ENCODE measurements at regions of chr2 and their contacts with region 1.

Region 1: GRCh38 chr2:197499594-197500526 is at the starts of genes HSPD1 and HSPE1:
- DNase-seq: peak; percentile 99
- ATAC-seq: peak; percentile 83
- H3K4me3 ChIP-seq: peak within 1 kb of the TSS; percentile 81 to 83
- H3K27ac ChIP-seq: peak within 1 kb of the TSS; percentile 98
- H3K4me1 ChIP-seq: peaks cover 7 to 29% of the 10 kb centered on the region in 2 experiments; a peak in 3 of 4 replicates
- H3K27me3 ChIP-seq: no peaks in the 10 kb centered on the region
- CTCF ChIP-seq: no peak
- POLR2A ChIP-seq: peak; percentile 84
- RAD21 ChIP-seq: no peak; the same call in 1 of the 2 replicates
- total RNA-seq, gene HSPD1: 995 TPM
- total RNA-seq, gene HSPE1: 291 TPM

Region 2: GRCh38 chr2:197198890-197199289 is 301.0 kb before region 1 on chr2:
- CTCF ChIA-PET with region 1: no interaction called
- POLR2A ChIA-PET with region 1: no interaction called
- RAD21 ChIA-PET with region 1: no interaction called
- intact Hi-C with region 1: no loop called
- DNase-seq: no peak
- ATAC-seq: no peak
- H3K4me3 ChIP-seq: no peak overlapping the region
- H3K27ac ChIP-seq: no peak overlapping the region
- H3K4me1 ChIP-seq: peaks cover 0 to 5% of the 10 kb centered on the region in 2 experiments; a peak in 1 of 4 replicates
- H3K27me3 ChIP-seq: no peaks in the 10 kb centered on the region
- CTCF ChIP-seq: no peak
- POLR2A ChIP-seq: no peak
- RAD21 ChIP-seq: no peak

Region 3: DNA sequence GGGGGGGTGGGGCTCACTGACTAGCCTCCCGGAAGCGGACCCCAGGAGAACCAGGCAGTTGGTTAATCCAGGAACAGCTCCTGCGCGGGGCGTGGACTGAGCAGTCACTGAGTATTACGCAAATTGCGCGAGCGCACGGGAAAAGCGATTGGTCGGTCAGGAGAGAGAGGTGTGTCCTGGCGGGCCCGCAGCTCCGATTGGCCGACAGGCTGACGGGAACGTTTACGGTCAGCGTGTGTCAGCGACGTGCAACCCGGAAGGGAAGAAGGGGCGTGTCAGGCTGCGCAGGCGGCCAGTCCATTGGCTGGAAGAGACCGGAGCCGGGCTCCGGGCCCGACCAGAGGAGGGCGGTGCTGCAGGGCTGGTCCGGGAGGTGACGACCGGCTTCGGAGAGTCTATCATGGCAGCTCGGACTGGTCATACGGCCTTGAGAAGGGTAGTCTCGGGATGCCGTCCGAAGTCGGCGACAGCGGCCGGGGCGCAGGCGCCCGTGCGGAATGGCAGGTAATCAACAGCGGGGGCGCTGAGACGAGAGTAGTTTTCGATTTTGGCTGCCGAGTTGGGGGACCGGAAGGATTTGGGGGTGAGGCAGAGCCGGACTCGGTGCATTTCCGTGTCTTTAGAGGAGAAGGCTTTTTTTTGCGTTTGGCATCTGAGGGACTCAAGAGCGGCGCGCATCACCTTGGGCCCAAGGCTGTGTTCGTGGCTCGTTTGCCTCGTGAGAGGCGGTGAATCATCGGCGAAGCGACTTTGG is 46.5 kb before region 1 on chr2 and contains the start of gene COQ10B:
- CTCF ChIA-PET with region 1: no interaction called
- POLR2A ChIA-PET with region 1: interaction called, 7 read pairs
- RAD21 ChIA-PET with region 1: no interaction called
- intact Hi-C with region 1: loop called (anchors 1 kb)
- DNase-seq: peak; percentile 99
- ATAC-seq: peak; percentile 95
- H3K4me3 ChIP-seq: peak within 1 kb of the TSS; percentile 84 to 99
- H3K27ac ChIP-seq: peak within 1 kb of the TSS; percentile 70
- H3K4me1 ChIP-seq: peaks cover 4 to 13% of the 10 kb centered on the region in 2 experiments; a peak in 2 of 4 replicates
- H3K27me3 ChIP-seq: no peaks in the 10 kb centered on the region
- CTCF ChIP-seq: no peak; a peak in 1 of 6 replicates
- POLR2A ChIP-seq: peak; percentile 53
- RAD21 ChIP-seq: no peak
- total RNA-seq, gene COQ10B: 20.4 TPM

Region 4: GRCh38 chr2:197487385-197487784 is 12.5 kb before region 1 on chr2:
- CTCF ChIA-PET with region 1: no interaction called
- POLR2A ChIA-PET with region 1: interaction called, 13 read pairs
- RAD21 ChIA-PET with region 1: no interaction called
- intact Hi-C with region 1: no loop called
- DNase-seq: no peak
- ATAC-seq: no peak
- H3K4me3 ChIP-seq: no peak overlapping the region
- H3K27ac ChIP-seq: no peak overlapping the region
- H3K4me1 ChIP-seq: no peaks in the 10 kb centered on the region
- H3K27me3 ChIP-seq: no peaks in the 10 kb centered on the region
- CTCF ChIP-seq: no peak
- POLR2A ChIP-seq: no peak
- RAD21 ChIP-seq: no peak

Region 5: DNA sequence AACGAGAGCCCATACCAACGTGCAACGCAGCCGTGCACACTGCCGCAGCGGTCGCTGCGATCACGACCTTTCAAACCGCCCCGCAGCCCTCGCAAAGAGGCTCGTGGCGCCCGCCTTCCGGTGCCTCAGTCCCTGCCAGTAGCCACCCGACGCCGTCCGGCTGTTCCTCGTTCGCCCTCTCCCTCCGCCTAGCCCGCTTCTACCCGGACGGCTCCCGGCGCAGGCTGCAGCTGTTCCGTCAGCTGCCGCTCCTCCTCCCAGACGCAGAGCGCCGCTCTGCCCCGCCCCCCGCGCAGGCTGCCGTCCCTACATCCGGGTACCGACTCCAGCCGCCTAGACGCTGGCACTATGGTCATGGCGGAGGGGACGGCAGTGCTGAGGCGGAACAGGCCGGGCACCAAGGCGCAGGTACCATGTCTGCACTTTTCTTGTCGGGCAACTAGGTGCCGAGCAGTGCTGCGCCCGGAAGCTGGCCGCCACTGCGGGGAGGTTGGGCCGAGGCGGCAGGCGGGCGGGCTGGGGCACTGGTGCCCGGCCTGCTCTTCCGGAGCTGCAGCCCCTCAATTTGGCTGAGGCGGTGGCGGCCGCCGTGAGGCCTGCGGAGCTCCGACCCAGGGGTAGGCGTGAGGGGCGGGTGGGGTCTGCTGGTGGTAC is 16.0 kb after region 1 on chr2 and contains the start of gene MOB4:
- CTCF ChIA-PET with region 1: no interaction called
- POLR2A ChIA-PET with region 1: interaction called, 25 read pairs
- RAD21 ChIA-PET with region 1: no interaction called
- intact Hi-C with region 1: no loop called
- DNase-seq: peak; percentile 86
- ATAC-seq: peak; percentile 94
- H3K4me3 ChIP-seq: peak within 1 kb of the TSS; percentile 77 to 93
- H3K27ac ChIP-seq: peak within 1 kb of the TSS; percentile 74
- H3K4me1 ChIP-seq: peaks cover 10 to 17% of the 10 kb centered on the region in 2 experiments; a peak in 3 of 4 replicates
- H3K27me3 ChIP-seq: no peaks in the 10 kb centered on the region
- CTCF ChIP-seq: no peak
- POLR2A ChIP-seq: peak; percentile 97
- RAD21 ChIP-seq: no peak
- total RNA-seq, gene MOB4: 24.4 TPM

Region 6: DNA sequence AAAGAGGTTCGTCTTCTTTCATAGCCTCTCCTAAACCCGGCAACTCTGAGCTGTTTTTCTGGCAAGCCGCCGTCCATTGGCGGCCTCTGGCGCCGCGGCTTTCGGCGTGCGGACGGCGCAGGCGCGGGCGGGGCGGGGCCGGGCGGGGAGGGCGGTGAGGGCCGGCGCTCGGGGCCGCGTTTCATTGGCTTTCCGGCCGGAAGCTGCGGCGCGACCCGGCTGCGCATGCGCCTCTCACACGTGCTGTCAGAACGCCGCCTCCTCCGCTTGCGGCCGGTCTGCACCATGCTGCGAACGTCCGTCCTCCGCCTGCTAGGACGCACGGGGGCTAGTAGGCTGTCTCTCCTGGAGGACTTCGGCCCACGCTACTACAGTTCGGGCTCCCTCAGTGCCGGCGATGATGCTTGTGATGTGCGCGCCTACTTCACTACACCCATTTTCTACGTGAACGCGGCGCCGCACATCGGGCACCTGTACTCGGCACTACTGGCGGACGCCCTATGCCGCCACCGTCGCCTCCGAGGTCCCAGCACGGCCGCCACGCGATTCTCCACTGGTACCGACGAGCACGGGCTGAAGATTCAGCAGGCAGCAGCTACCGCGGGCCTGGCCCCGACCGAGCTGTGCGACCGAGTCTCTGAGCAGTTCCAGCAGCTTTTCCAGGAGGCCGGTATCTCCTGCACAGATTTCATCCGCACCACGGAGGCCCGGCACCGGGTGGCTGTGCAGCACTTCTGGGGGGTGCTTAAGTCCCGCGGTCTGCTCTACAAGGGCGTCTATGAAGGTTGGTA is 205.5 kb after region 1 on chr2 and contains the start of gene MARS2:
- CTCF ChIA-PET with region 1: no interaction called
- POLR2A ChIA-PET with region 1: interaction called, 4 read pairs
- RAD21 ChIA-PET with region 1: no interaction called
- intact Hi-C with region 1: loop called (anchors 10 kb)
- DNase-seq: peak; percentile 77
- ATAC-seq: peak; percentile 87
- H3K4me3 ChIP-seq: peak within 1 kb of the TSS; percentile 78 to 89
- H3K27ac ChIP-seq: peak within 1 kb of the TSS; percentile 66
- H3K4me1 ChIP-seq: peaks cover 11 to 19% of the 10 kb centered on the region in 2 experiments; a peak in 3 of 4 replicates
- H3K27me3 ChIP-seq: no peaks in the 10 kb centered on the region
- CTCF ChIP-seq: no peak
- POLR2A ChIP-seq: peak; percentile 92
- RAD21 ChIP-seq: no peak
- total RNA-seq, gene MARS2: 14.4 TPM